Aorta (tissue), 5 donors: ENCODE measurements at regions of chr6 and their contacts with region 1.

Region 1: GRCh38 chr6:32255199-32256153 is 31.6 kb upstream of the NOTCH4 start:
- DNase-seq: peak; percentile 80 to 90
- ATAC-seq: peak; percentile 94
- H3K4me3 ChIP-seq: peak overlapping the region; percentile 10 to 50
- H3K27ac ChIP-seq: no peak overlapping the region
- H3K4me1 ChIP-seq: no peaks in the 10 kb centered on the region
- H3K27me3 ChIP-seq: no peaks in the 10 kb centered on the region

Region 2: GRCh38 chr6:32118782-32119628 is 136.5 kb before region 1 on chr6:
- intact Hi-C with region 1: loop called in 1 of 2 experiments (anchors 10 kb)
- DNase-seq: peak; percentile 91 to 95
- ATAC-seq: peak; percentile 83
- H3K4me3 ChIP-seq: no peak overlapping the region
- H3K27ac ChIP-seq: peak overlapping the region in 1 of 2 donors; percentile 10
- H3K4me1 ChIP-seq: no peaks in the 10 kb centered on the region
- H3K27me3 ChIP-seq: no peaks in the 10 kb centered on the region

Region 3: DNA sequence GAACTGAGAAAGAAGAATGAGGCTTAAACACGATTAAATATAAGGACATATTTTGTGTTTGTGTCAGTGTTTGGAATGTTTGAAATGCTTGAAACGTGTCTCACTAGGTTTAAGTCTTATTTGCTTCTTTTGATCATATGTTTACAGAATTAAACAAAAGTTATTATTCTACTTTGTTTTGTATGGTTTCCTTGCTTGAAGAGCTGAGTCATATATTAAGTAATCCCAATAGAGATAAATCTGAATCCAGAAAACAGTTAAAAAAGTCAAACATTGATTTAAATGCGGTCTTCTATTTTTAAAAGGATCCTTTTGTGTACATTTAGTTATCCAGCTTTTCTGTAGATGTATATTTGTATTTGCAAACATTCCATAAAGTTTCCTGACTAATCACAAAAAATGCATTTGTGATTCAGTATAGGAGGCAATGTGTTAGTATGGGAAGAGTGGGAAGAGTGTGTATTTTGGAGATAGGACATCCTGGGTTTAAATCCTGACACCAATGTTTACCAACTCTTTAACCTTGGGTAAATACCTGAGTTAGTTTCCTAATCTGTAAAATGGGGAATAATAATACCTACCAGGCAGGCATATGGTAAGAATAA is 43.3 kb after region 1 on chr6:
- intact Hi-C with region 1: no loop called
- DNase-seq: no peak
- ATAC-seq: no peak
- H3K4me3 ChIP-seq: no peak overlapping the region
- H3K27ac ChIP-seq: no peak overlapping the region
- H3K4me1 ChIP-seq: no peaks in the 10 kb centered on the region
- H3K27me3 ChIP-seq: peaks cover 0 to 2% of the 10 kb centered on the region in 2 donors

Region 4: GRCh38 chr6:32763427-32763826 is 508.0 kb after region 1 on chr6 and contains the start of gene HLA-DQB2:
- intact Hi-C with region 1: no loop called
- DNase-seq: no peak
- ATAC-seq: no peak
- H3K4me3 ChIP-seq: no peak within 1 kb of the TSS
- H3K27ac ChIP-seq: no peak within 1 kb of the TSS
- H3K4me1 ChIP-seq: no peaks in the 10 kb centered on the region
- H3K27me3 ChIP-seq: peaks cover 0 to 6% of the 10 kb centered on the region in 2 donors
- total RNA-seq, gene HLA-DQB2: 2.3 to 18.1 TPM